Ascending aorta (tissue), 2 donors: ENCODE measurements at regions of chr17 and their contacts with region 1.

Region 1: DNA sequence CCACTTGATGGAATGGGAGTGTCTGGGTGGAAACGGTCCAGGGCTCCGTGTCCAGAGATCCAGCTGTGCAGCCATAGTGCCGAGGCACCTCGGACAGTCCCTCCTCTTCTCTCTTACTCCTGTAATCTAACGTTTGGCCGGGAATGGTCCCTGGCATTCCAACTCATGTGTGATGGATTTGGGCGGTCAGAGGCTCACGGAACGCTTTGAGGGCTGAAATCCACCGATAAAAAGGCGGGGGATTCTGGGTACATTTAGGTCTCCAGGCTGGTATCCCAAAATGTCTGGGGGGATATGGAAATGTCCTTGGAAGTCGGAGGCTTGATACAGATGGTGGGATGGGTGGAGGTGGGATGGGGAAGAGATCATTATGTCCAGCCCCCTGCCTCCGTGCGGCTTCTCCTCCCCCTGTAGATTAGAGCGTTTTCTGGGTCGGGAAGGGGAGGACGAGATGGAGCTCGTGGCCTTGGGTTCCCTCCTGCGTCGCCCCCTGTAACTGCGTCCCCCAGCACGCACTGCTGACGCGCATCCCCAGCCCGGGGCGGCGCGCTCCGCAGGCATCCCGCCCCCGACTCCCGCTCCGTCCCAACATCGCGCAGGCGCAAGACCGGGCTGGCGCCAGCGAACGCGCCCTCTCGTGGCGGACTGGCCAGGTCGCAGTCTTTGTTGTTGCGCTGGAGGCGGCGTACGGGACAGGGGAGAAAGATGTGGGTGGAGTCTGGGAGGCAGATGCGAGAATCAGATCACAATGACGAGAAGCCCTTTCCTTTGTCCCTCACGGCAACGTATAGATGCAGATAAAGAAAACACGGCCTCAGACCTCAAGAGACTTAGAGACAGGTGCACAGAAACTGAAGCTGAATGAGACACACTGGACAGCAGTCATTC is 4.5 kb upstream of the SGCA start:
- DNase-seq: peak; percentile 67 to 96
- H3K4me3 ChIP-seq: peak overlapping the region; percentile 51 to 73
- H3K27ac ChIP-seq: peak overlapping the region; percentile 80 to 89
- H3K4me1 ChIP-seq: peaks cover 9 to 29% of the 10 kb centered on the region in 2 donors
- H3K27me3 ChIP-seq: no peaks in the 10 kb centered on the region
- CTCF ChIP-seq: peak; percentile 92 to 98 (median 94)

Region 2: GRCh38 chr17:50139950-50140871 is 21.1 kb before region 1 on chr17:
- intact Hi-C with region 1: loop called (anchors 2 kb)
- DNase-seq: peak in 1 of 2 donors; percentile 90
- H3K4me3 ChIP-seq: no peak overlapping the region
- H3K27ac ChIP-seq: peak overlapping the region; percentile 1 to 50
- H3K4me1 ChIP-seq: peaks cover 0 to 5% of the 10 kb centered on the region in 2 donors
- H3K27me3 ChIP-seq: no peaks in the 10 kb centered on the region
- CTCF ChIP-seq: peak; percentile 92 to 95 (median 93)